Panc1 (cell line): ENCODE measurements at regions of chr19 and their contacts with region 1.

Region 1: GRCh38 chr19:29385191-29385795 is 140.5 kb upstream of the VSTM2B start:
- DNase-seq: no peak
- ATAC-seq: no peak
- H3K4me3 ChIP-seq: no peak overlapping the region
- H3K27ac ChIP-seq: no peak overlapping the region
- H3K4me1 ChIP-seq: no peaks in the 10 kb centered on the region
- H3K27me3 ChIP-seq: peaks cover 3% of the 10 kb centered on the region; the same call in 1 of the 2 replicates
- CTCF ChIP-seq: no peak

Region 2: GRCh38 chr19:29308977-29309590 is 76.2 kb before region 1 on chr19:
- CTCF ChIA-PET with region 1: no interaction called
- POLR2A ChIA-PET with region 1: no interaction called
- in situ Hi-C with region 1: no loop called
- intact Hi-C with region 1: no loop called
- DNase-seq: no peak
- ATAC-seq: no peak
- H3K4me3 ChIP-seq: no peak overlapping the region
- H3K27ac ChIP-seq: no peak overlapping the region
- H3K4me1 ChIP-seq: no peaks in the 10 kb centered on the region
- H3K27me3 ChIP-seq: peaks cover 18% of the 10 kb centered on the region
- CTCF ChIP-seq: no peak

Region 3: DNA sequence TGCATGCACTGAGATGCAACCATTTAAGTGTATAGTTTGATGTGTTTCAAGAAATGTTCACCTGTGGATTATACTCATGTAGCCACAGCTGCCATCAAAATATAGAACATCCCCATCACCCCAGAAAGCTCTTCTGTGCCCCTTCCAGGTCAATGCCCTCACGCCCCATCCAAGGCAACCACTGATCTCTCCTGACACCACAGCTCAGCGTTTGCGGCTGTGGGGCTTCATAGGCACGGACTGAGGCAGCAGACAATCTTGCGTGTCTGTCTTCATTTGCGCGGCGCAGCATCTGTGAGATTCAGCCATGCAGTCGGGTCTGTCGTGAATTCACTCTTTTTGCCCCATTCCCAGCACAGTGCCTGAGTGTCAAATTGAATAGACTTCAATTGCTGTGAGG is 18.5 kb before region 1 on chr19:
- CTCF ChIA-PET with region 1: interaction called, 10 read pairs
- POLR2A ChIA-PET with region 1: no interaction called
- in situ Hi-C with region 1: no loop called
- intact Hi-C with region 1: no loop called
- DNase-seq: no peak
- ATAC-seq: no peak
- H3K4me3 ChIP-seq: no peak overlapping the region
- H3K27ac ChIP-seq: no peak overlapping the region
- H3K4me1 ChIP-seq: no peaks in the 10 kb centered on the region
- H3K27me3 ChIP-seq: peaks cover 21% of the 10 kb centered on the region
- CTCF ChIP-seq: no peak